Activated CD8-positive, alpha-beta T cell treated with anti-CD3 and anti-CD28 coated beads, Interleukin-2, amount 10 ng/mL, durations not matched to agents 7 days and 5 days (primary cell): ENCODE measurements at regions of chr17 and their contacts with region 1.

Region 1: GRCh38 chr17:40168262-40168832 is 8.9 kb upstream of the RAPGEFL1 start:
- DNase-seq: peak; percentile 48
- ATAC-seq: peak; percentile 60
- H3K4me3 Mint-ChIP-seq: no peak overlapping the region
- H3K27ac Mint-ChIP-seq: peak overlapping the region; percentile 47
- H3K4me1 Mint-ChIP-seq: peaks cover 6% of the 10 kb centered on the region
- H3K27me3 Mint-ChIP-seq: no peaks in the 10 kb centered on the region

Region 2: DNA sequence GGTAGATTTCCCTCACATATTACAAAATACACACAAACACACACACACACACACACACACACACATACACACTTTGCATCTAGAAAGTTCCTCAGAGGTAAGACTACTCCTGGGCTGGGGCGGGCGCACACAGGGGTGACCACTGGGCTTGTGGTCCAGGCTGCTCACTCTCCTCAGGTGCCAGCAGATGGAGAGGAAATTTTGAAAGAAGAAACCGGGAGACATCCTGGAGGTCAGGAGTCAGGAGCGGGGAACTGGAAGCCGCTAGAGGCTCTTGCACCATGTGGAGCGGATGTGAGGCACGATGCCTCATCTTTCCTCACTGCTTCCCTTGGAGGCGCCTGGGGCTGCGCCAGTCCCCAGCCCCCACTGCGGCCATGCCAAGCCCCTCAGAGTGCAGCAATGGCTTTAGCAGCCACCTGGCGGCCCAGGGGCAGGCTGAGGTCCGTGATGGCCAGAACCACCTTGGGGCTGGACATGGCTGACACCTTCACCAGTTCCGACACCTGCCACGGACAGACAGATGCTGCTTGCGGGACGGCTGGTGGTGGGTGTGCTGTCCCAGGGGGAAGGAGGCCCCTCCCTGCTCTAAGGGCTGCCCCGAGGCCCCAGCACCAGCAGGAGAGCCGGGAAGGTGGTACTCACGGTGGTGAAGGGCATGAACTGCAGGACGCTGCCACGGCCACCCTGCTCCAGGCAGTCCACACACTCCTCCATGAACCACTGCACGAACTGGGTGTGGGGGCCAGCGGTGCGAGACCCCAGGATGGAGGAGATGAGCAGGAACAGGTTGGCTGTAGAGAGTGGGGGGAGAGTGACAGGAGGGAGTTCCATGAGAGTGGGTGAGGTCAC is 149.0 kb before region 1 on chr17:
- CTCF ChIA-PET with region 1: interaction called, 30 read pairs
- POLR2A ChIA-PET with region 1: no interaction called
- DNase-seq: no peak
- ATAC-seq: no peak
- H3K4me3 Mint-ChIP-seq: no peak overlapping the region
- H3K27ac Mint-ChIP-seq: no peak overlapping the region
- H3K4me1 Mint-ChIP-seq: peaks cover 3% of the 10 kb centered on the region
- H3K27me3 Mint-ChIP-seq: no peaks in the 10 kb centered on the region

Region 3: DNA sequence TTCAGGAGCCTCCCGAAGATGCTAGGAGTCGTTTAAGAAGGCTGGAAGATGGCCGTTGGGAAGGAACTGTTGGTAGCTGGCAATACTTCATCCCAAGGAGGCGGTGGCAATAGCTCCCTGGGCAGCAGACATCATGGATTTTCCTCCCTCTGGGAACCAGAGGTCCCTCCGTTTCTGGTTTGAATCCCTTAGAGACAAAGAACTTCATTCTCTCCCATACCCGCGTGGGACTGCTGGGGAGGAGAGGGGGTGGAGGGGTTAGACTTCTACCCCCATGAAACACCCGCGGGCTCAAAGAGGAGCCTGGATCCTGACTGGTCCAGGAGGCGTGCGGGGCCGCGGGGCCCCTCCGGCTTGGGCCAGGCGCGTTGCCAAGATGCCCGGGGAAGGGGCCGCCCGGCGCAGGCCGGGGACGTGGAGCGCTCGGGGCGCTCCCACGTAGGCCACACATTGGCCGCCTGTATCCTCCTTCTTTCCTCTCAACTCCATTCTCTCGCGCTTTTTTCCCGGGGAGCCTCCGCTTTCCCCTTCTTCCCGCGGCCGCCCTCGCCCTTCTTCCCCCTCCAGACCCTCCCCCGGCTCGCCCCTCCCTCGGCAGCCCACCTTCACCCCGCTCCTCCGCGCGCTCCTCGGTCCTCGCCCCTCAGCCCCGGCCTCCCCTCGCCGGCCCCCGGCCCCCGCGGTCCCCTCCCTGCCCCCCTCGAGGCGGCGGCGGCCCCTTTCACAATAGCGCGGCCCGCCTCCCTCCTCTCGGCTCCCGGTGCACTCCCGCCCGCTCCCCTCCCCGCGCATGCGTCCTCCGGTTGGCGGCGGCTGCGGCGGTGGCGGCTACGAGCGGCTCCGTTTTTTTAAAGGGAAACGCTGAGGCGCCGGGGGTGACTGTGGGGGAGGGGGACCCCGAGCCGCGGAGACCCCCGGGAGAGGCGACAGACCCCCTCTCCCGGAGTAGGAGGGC is 46.9 kb before region 1 on chr17 and contains the start of gene MSL1:
- CTCF ChIA-PET with region 1: interaction called, 182 read pairs
- POLR2A ChIA-PET with region 1: no interaction called
- DNase-seq: peak; percentile 86
- ATAC-seq: peak; percentile 72
- H3K4me3 Mint-ChIP-seq: peak within 1 kb of the TSS; percentile 84
- H3K27ac Mint-ChIP-seq: peak within 1 kb of the TSS; percentile 83
- H3K4me1 Mint-ChIP-seq: peaks cover 35% of the 10 kb centered on the region
- H3K27me3 Mint-ChIP-seq: no peaks in the 10 kb centered on the region
- total RNA-seq, gene MSL1: 80.5 to 83.2 TPM

Region 4: DNA sequence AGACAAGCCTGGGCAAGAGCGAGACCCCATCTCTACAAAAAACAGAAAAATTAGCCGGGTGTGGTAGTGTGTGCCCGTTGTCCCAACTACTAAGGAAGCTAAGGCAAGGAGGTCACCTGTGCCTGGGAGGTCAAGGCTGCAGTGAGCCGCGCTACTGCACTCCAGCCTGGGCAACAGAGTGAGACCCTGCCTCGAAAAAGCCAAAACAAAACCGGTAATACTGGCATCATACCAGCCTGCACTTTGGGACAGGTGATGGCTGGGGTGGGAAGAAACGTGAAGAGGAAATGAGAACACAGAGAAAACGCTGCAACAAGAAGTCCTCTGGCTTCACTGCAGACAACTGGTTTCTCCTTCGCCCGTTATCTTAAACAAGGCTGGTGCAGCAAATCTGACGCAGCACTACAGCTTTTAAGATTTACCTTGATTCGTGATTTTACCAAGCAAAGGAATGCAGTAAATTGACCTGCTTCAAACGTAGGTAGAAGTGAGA is 28.7 kb before region 1 on chr17:
- CTCF ChIA-PET with region 1: interaction called, 16 read pairs
- POLR2A ChIA-PET with region 1: interaction called, 8 read pairs
- DNase-seq: no peak
- ATAC-seq: no peak
- H3K4me3 Mint-ChIP-seq: peak overlapping the region; percentile 87
- H3K27ac Mint-ChIP-seq: peak overlapping the region; percentile 94
- H3K4me1 Mint-ChIP-seq: peaks cover 36% of the 10 kb centered on the region
- H3K27me3 Mint-ChIP-seq: no peaks in the 10 kb centered on the region

Region 5: DNA sequence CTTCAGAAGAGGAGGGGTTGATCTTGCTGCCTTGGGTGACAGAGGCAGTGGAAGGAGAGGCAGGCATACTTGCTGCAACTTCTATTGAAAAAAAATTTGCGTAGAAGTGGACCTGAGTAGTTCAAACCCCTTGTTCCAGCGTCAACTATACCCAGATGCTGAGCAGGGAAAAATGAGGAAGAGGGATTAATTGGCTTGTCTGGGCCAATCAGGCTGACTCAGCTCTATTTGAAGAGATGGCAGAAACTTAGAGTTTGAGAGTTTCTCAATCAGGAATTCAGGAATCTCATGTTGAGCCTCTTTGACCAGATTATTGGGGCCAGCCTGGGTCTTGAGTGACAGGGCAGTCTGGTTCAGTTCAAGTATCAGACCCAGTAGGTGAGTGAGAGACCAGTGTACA is 10.4 kb before region 1 on chr17:
- CTCF ChIA-PET with region 1: interaction called, 33 read pairs
- POLR2A ChIA-PET with region 1: no interaction called
- DNase-seq: no peak
- ATAC-seq: no peak
- H3K4me3 Mint-ChIP-seq: no peak overlapping the region
- H3K27ac Mint-ChIP-seq: no peak overlapping the region
- H3K4me1 Mint-ChIP-seq: peaks cover 5% of the 10 kb centered on the region
- H3K27me3 Mint-ChIP-seq: no peaks in the 10 kb centered on the region